Tibial artery (tissue), 4 donors: ENCODE measurements at regions of chr16 and their contacts with region 1.

Region 1: DNA sequence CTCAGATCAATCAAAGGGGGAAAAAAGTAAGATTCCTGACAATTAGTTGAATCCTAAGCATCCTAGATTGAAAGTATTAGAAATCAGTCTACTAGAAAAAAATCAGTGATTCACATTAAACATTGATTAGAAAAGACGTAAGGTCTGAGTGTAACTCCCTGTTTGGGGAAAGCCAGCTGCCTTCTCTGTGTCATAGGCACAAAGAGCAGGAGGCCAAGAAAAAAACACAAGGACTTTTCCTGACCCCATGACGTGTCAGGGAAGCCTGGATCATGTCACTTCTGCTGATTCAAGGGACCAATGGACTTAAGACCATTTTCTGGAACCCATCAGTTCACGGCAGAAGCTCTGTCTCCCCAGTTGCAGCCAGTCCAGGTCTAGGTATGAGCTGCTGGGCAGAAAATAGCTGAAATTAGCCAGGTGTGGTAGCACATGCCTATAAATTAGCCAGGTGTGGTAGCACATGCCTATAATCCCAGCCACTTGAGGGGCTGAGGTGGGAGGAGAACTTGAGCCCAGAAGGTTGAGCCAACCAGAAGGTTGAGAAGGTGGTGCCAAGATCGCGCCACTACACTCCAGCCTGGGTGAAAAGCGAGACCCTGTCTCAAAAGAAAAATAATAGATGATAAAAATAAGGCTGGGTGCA is 35.9 kb downstream of the RANBP10 start:
- DNase-seq: no peak
- H3K4me3 ChIP-seq: no peak overlapping the region
- H3K27ac ChIP-seq: no peak overlapping the region
- H3K4me1 ChIP-seq: peaks cover 0 to 18% (median 13%) of the 10 kb centered on the region in 4 donors
- H3K27me3 ChIP-seq: no peaks in the 10 kb centered on the region
- CTCF ChIP-seq: no peak

Region 2: DNA sequence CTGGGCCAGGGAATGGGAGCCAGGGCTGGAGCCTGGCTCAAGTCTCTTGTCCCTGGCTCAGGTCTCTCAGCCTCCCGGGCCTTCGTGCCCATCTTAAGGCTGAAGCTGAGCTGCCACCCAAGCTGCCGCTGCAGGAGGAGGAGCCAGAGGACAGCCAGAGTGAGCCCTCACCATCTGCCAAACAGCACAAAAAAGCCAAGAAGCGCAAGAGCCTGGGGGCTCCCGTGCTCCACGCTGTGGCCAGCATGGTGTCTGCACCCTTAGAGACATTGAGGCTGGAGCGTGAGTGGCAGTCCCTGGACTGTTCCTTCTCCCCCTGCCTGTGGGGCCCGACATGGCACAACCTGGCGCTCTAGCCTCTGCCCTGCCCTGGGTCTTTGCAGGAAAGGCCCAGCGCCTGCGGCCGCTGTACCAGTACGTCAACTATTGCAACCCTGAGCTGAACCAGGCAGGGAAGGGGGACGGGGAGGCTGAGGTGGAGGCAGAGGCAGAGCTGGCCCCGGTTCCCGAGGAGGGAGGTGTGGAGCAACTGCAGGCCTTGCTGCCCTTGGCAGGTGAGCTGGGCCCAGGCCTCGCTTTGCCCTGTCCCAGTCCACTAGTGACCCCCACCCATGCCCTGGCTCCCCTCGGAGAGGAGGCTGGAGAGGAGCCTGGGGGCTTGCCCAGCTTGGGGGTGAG is 102.5 kb before region 1 on chr16:
- intact Hi-C with region 1: no loop called
- DNase-seq: peak; percentile 88 to 95
- H3K4me3 ChIP-seq: peak overlapping the region; percentile 71 to 82
- H3K27ac ChIP-seq: peak overlapping the region; percentile 90 to 95
- H3K4me1 ChIP-seq: peaks cover 0 to 31% (median 23%) of the 10 kb centered on the region in 4 donors
- H3K27me3 ChIP-seq: no peaks in the 10 kb centered on the region
- CTCF ChIP-seq: peak; percentile 93 to 99

Region 3: GRCh38 chr16:67800338-67800926 is 30.0 kb after region 1 on chr16:
- intact Hi-C with region 1: loop called (anchors 2 kb)
- DNase-seq: no peak
- H3K4me3 ChIP-seq: no peak overlapping the region
- H3K27ac ChIP-seq: no peak overlapping the region
- H3K4me1 ChIP-seq: peaks cover 0 to 26% (median 11%) of the 10 kb centered on the region in 4 donors
- H3K27me3 ChIP-seq: no peaks in the 10 kb centered on the region
- CTCF ChIP-seq: no peak

Region 4: GRCh38 chr16:68951991-68952877 is 1181.8 kb after region 1 on chr16:
- intact Hi-C with region 1: no loop called
- DNase-seq: no peak
- H3K4me3 ChIP-seq: no peak overlapping the region
- H3K27ac ChIP-seq: no peak overlapping the region
- H3K4me1 ChIP-seq: no peaks in the 10 kb centered on the region
- H3K27me3 ChIP-seq: no peaks in the 10 kb centered on the region
- CTCF ChIP-seq: no peak